Transverse colon (tissue), 4 donors: ENCODE measurements at regions of chr7 and their contacts with region 1.

Region 1: GRCh38 chr7:135970682-135971365 is 6.3 kb downstream of the MTPN start:
- DNase-seq: no peak
- H3K4me3 ChIP-seq: no peak overlapping the region
- H3K27ac ChIP-seq: peak overlapping the region in 1 of 4 donors; percentile 2
- H3K4me1 ChIP-seq: peaks cover 5 to 43% (median 10%) of the 10 kb centered on the region in 4 donors
- H3K27me3 ChIP-seq: no peaks in the 10 kb centered on the region
- CTCF ChIP-seq: no peak
- EP300 ChIP-seq: no peak
- POLR2A ChIP-seq: no peak

Region 2: GRCh38 chr7:134547397-134548054 is 1423.3 kb before region 1 on chr7:
- in situ Hi-C with region 1: no loop called
- intact Hi-C with region 1: loop called (anchors 5 kb)
- DNase-seq: peak; percentile 83
- H3K4me3 ChIP-seq: peak overlapping the region in 2 of 4 donors; percentile 16 to 51
- H3K27ac ChIP-seq: peak overlapping the region in 1 of 4 donors; percentile 47
- H3K4me1 ChIP-seq: peaks cover 0 to 10% (median 3%) of the 10 kb centered on the region in 4 donors
- H3K27me3 ChIP-seq: no peaks in the 10 kb centered on the region
- CTCF ChIP-seq: peak; percentile 83 to 92 (median 88)
- EP300 ChIP-seq: no peak
- POLR2A ChIP-seq: no peak